Activated CD4-positive, alpha-beta T cell treated with anti-CD3 and anti-CD28 coated beads for 36 hours (primary cell): ENCODE measurements at regions of chr16 and their contacts with region 1.

Region 1: DNA sequence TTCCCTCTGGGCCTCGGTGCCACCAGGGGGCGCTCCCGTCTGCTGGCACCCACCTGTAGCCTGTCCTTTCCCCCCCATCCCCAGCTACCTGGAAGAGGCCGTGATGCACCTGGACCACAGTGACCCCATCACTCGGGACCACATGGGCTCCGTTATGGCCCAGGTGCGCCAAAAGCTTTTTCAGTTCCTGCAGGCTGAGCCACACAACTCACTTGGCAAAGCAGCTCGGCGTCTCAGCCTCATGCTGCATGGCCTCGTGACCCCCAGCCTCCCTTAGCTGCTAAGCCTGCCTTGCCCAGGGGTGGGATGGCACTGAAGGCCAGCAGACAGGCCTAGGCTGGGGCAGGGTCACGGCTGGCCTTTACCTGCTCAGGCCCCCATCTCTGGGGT is 818 bp upstream of the NRN1L start:
- DNase-seq: peak; percentile 85
- ATAC-seq: peak; percentile 92
- H3K4me3 Mint-ChIP-seq: no peak overlapping the region
- H3K27ac Mint-ChIP-seq: no peak overlapping the region
- H3K4me1 Mint-ChIP-seq: no peaks in the 10 kb centered on the region
- H3K27me3 Mint-ChIP-seq: no peaks in the 10 kb centered on the region

Region 2: GRCh38 chr16:67773099-67773498 is 110.8 kb before region 1 on chr16:
- CTCF ChIA-PET with region 1: no interaction called
- POLR2A ChIA-PET with region 1: no interaction called
- intact Hi-C with region 1: no loop called
- DNase-seq: no peak
- ATAC-seq: no peak
- H3K4me3 Mint-ChIP-seq: no peak overlapping the region
- H3K27ac Mint-ChIP-seq: no peak overlapping the region
- H3K4me1 Mint-ChIP-seq: peaks cover 3% of the 10 kb centered on the region
- H3K27me3 Mint-ChIP-seq: no peaks in the 10 kb centered on the region

Region 3: GRCh38 chr16:67872786-67873537 is 10.9 kb before region 1 on chr16 and contains the start of gene EDC4:
- CTCF ChIA-PET with region 1: interaction called, 14 read pairs
- POLR2A ChIA-PET with region 1: no interaction called
- intact Hi-C with region 1: no loop called
- DNase-seq: peak; percentile 92
- ATAC-seq: peak; percentile 89
- H3K4me3 Mint-ChIP-seq: peak within 1 kb of the TSS; percentile 77
- H3K27ac Mint-ChIP-seq: peak within 1 kb of the TSS; percentile 92
- H3K4me1 Mint-ChIP-seq: peaks cover 30% of the 10 kb centered on the region
- H3K27me3 Mint-ChIP-seq: no peaks in the 10 kb centered on the region
- total RNA-seq, gene EDC4: 92.8 to 96.9 TPM

Region 4: GRCh38 chr16:67917852-67918236 is 34.0 kb after region 1 on chr16:
- CTCF ChIA-PET with region 1: interaction called, 12 read pairs
- POLR2A ChIA-PET with region 1: no interaction called
- intact Hi-C with region 1: no loop called
- DNase-seq: peak; percentile 79
- ATAC-seq: peak; percentile 100
- H3K4me3 Mint-ChIP-seq: no peak overlapping the region
- H3K27ac Mint-ChIP-seq: peak overlapping the region; percentile 91
- H3K4me1 Mint-ChIP-seq: peaks cover 34% of the 10 kb centered on the region
- H3K27me3 Mint-ChIP-seq: no peaks in the 10 kb centered on the region

Region 5: DNA sequence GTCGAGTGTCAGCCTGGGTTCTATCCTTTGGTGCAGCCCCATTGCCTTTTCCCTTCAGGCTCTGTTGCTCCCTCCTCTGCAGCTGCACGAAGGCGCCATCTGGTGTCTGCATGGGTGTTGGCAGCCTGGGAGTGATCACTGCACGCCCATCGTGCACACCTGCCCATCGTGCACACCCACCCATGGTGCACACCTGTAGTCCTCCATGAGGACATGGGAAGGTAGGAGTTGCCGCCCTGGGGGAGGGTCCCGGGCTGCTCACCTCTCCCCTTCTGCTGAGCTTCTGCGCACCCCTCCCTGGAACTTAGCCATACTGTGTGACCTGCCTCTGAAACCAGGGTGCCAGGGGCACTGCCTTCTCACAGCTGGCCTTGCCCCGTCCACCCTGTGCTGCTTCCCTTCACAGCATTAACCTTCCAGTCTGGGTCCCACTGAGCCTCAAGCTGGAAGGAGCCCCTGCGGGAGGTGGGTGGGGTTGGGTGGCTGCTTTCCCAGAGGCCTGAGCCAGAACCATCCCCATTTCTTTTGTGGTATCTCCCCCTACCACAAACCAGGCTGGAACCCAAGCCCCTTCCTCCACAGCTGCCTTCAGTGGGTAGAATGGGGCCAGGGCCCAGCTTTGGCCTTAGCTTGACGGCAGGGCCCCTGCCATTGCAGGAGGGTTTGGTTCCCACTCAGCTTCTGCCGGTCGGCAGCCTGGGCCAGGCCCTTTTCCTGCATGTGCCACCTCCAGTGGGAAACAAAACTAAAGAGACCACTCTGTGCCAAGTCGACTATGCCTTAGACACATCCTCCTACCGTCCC is 44.9 kb after region 1 on chr16:
- CTCF ChIA-PET with region 1: interaction called, 21 read pairs
- POLR2A ChIA-PET with region 1: no interaction called
- intact Hi-C with region 1: loop called (anchors 1 kb)
- DNase-seq: peak; percentile 89
- ATAC-seq: peak; percentile 92
- H3K4me3 Mint-ChIP-seq: no peak overlapping the region
- H3K27ac Mint-ChIP-seq: no peak overlapping the region
- H3K4me1 Mint-ChIP-seq: no peaks in the 10 kb centered on the region
- H3K27me3 Mint-ChIP-seq: no peaks in the 10 kb centered on the region